ENCODE measurements at regions of chr3 and their contacts with region 1.

Region 1: GRCh38 chr3:178385280-178385952 is 150.8 kb upstream of the KCNMB2 start:
- DNase-seq: no peak
- H3K4me3 ChIP-seq: no peak overlapping the region
- H3K27ac ChIP-seq: no peak overlapping the region
- H3K27me3 ChIP-seq: no peaks in the 10 kb centered on the region
- CTCF ChIP-seq: peak; percentile 84

Region 2: GRCh38 chr3:176872771-176873209 is 1512.6 kb before region 1 on chr3:
- CTCF ChIA-PET with region 1: interaction called, 35 read pairs
- POLR2A ChIA-PET with region 1: no interaction called
- DNase-seq: peak; percentile 11
- H3K4me3 ChIP-seq: no peak overlapping the region
- H3K27ac ChIP-seq: no peak overlapping the region
- H3K27me3 ChIP-seq: no peaks in the 10 kb centered on the region
- CTCF ChIP-seq: peak; percentile 85

Region 3: DNA sequence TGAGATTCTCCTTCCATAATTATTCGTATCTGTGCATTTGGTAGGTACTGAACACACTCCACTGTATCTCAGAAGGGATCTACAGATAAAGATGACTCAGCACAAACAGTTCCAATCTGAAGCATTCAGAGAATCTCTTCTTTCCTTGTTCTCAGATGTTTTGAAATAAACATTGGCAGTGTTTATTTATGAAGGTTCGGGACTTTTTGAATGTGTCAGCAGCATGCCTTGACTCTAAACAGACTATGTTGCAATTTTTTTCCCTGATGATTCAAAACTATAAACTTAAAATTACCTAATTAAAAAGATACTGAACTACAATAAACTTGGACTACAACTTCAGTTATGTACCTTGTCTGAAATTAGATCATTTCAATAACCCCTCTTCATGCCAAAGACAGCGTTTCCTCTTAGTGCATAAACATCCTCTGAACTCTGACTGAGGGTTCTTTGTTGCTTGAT is 575.2 kb before region 1 on chr3:
- CTCF ChIA-PET with region 1: interaction called, 12 read pairs
- POLR2A ChIA-PET with region 1: no interaction called
- DNase-seq: peak; percentile 85
- H3K4me3 ChIP-seq: no peak overlapping the region
- H3K27ac ChIP-seq: no peak overlapping the region
- H3K27me3 ChIP-seq: no peaks in the 10 kb centered on the region
- CTCF ChIP-seq: no peak

Region 4: GRCh38 chr3:177906126-177906511 is 479.3 kb before region 1 on chr3:
- CTCF ChIA-PET with region 1: interaction called, 17 read pairs
- POLR2A ChIA-PET with region 1: no interaction called
- DNase-seq: peak; percentile 63
- H3K4me3 ChIP-seq: no peak overlapping the region
- H3K27ac ChIP-seq: peak overlapping the region; percentile 90
- H3K27me3 ChIP-seq: no peaks in the 10 kb centered on the region
- CTCF ChIP-seq: peak; percentile 43